Astrocyte of the cerebellum (primary cell): ENCODE measurements at regions of chr7 and their contacts with region 1.

Region 1: GRCh38 chr7:184294-185264 is 7.8 kb upstream of the FAM20C start:
- DNase-seq: no peak
- H3K4me3 ChIP-seq: no peak overlapping the region
- CTCF ChIP-seq: no peak

Region 2: GRCh38 chr7:112881-113280 is 71.7 kb before region 1 on chr7:
- in situ Hi-C with region 1: loop called (anchors 5 kb)
- DNase-seq: no peak
- H3K4me3 ChIP-seq: no peak overlapping the region
- CTCF ChIP-seq: no peak

Region 3: DNA sequence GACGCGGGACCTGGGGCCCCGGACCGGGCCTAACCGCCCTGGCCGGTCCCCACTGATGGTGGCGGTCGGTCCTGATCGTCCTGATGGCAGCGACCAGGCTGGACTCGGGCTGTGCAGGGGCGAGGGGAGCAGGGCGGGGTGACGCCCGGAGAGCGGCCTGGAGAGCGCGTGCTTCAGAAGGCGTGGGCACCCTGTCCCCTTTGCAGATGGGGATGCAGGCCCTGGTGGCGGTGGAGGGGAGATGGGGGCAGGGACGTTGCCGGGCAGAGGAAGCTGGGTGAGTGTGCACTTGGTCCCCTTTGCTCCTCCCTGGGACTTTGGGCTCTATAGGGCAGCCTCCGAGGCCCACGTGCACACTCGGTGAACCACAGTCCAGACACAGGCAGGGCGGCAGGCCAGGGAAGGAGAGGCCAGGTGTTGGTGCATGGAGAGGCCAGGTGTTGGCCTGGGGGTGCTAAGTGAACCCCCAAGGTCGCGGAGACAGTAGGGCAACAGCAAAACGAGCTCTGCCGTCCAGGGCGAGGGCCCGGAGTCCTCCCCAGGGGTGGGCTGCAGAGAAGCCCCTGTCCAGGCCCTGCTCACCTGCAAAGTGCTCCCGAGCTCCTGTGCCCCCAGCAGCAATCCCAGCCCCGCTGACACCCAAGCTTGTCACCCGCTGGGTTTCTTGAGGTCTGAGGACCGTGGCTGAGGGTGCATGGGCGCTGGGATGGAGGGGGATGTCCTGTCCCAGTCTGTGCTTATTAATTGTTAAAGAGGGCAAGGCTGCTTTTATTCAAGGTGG is 34.5 kb before region 1 on chr7:
- in situ Hi-C with region 1: loop called (anchors 5 kb)
- DNase-seq: no peak
- H3K4me3 ChIP-seq: peak overlapping the region; percentile 55
- CTCF ChIP-seq: no peak

Region 4: GRCh38 chr7:220151-220841 is 35.7 kb after region 1 on chr7:
- in situ Hi-C with region 1: no loop called
- DNase-seq: no peak
- H3K4me3 ChIP-seq: no peak overlapping the region
- CTCF ChIP-seq: no peak

Region 5: GRCh38 chr7:641269-641671 is 456.7 kb after region 1 on chr7:
- in situ Hi-C with region 1: no loop called
- DNase-seq: no peak
- H3K4me3 ChIP-seq: no peak overlapping the region
- CTCF ChIP-seq: no peak